ENCODE measurements at regions of chr11 and their contacts with region 1.

Region 1: GRCh38 chr11:73393479-73394380 is 17.5 kb downstream of the RELT start:
- DNase-seq: peak; percentile 74 to 86 (median 81)
- ATAC-seq: peak; percentile 93
- H3K4me3 ChIP-seq: no peak overlapping the region
- H3K27ac ChIP-seq: peak overlapping the region; percentile 8; the same call in 2 of the 3 replicates
- H3K4me1 ChIP-seq: peaks cover 0 to 48% of the 10 kb centered on the region in 2 experiments; a peak in 3 of 5 replicates
- H3K27me3 ChIP-seq: no peaks in the 10 kb centered on the region
- CTCF ChIP-seq: peak; percentile 86 to 94 (median 89)
- EP300 ChIP-seq: no peak
- POLR2A ChIP-seq: no peak
- RAD21 ChIP-seq: peak; percentile 90 to 93

Region 2: DNA sequence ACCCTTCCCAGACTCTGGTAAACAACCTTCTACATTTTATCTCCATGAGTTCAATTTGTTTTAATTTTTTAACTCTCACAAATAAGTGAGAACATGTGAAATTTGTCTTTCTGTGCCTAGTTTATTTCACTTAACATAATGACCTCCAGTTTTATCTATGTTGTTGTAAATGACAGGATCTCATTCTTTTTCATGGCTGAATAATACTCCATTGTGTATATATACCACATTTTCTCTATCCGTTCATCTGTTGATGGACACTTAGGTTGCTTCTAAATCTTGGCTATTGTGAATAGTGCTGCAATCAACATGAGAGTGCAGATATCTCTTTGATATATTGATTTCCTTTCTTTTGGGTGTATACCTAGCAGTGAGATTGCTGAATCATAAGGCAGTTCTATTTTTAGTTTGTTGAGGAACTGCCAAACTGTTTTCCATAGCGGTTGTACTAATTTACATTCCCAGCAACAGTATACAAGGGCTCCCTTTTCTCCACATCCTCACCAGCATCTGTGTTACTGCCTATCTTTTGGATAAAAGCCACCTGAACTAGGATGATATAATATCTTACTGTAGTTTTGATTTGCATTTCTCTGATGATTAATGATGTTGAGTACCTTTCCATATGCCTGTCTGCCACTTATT is 485.6 kb before region 1 on chr11:
- CTCF ChIA-PET with region 1: no interaction called
- POLR2A ChIA-PET with region 1: no interaction called
- in situ Hi-C with region 1: no loop called
- intact Hi-C with region 1: no loop called
- DNase-seq: no peak
- ATAC-seq: no peak
- H3K4me3 ChIP-seq: no peak overlapping the region
- H3K27ac ChIP-seq: no peak overlapping the region
- H3K4me1 ChIP-seq: no peaks in the 10 kb centered on the region
- H3K27me3 ChIP-seq: no peaks in the 10 kb centered on the region
- CTCF ChIP-seq: no peak
- EP300 ChIP-seq: no peak
- POLR2A ChIP-seq: no peak
- RAD21 ChIP-seq: no peak

Region 3: GRCh38 chr11:73307323-73308002 is 86.3 kb before region 1 on chr11:
- CTCF ChIA-PET with region 1: interaction called, 6 read pairs
- POLR2A ChIA-PET with region 1: interaction called, 3 read pairs
- in situ Hi-C with region 1: loop called (anchors 5 kb)
- intact Hi-C with region 1: no loop called
- DNase-seq: peak; percentile 92 to 94 (median 94)
- ATAC-seq: peak; percentile 93
- H3K4me3 ChIP-seq: peak overlapping the region; percentile 49
- H3K27ac ChIP-seq: peak overlapping the region; percentile 32; the same call in 1 of the 3 replicates
- H3K4me1 ChIP-seq: peaks cover 0 to 22% of the 10 kb centered on the region in 2 experiments; a peak in 4 of 5 replicates
- H3K27me3 ChIP-seq: peaks cover 6 to 43% of the 10 kb centered on the region in 2 experiments; a peak in 3 of 5 replicates
- CTCF ChIP-seq: peak; percentile 89 to 92 (median 91)
- EP300 ChIP-seq: peak; percentile 29; the same call in 1 of the 2 replicates
- POLR2A ChIP-seq: no peak
- RAD21 ChIP-seq: peak; percentile 83 to 91

Region 4: DNA sequence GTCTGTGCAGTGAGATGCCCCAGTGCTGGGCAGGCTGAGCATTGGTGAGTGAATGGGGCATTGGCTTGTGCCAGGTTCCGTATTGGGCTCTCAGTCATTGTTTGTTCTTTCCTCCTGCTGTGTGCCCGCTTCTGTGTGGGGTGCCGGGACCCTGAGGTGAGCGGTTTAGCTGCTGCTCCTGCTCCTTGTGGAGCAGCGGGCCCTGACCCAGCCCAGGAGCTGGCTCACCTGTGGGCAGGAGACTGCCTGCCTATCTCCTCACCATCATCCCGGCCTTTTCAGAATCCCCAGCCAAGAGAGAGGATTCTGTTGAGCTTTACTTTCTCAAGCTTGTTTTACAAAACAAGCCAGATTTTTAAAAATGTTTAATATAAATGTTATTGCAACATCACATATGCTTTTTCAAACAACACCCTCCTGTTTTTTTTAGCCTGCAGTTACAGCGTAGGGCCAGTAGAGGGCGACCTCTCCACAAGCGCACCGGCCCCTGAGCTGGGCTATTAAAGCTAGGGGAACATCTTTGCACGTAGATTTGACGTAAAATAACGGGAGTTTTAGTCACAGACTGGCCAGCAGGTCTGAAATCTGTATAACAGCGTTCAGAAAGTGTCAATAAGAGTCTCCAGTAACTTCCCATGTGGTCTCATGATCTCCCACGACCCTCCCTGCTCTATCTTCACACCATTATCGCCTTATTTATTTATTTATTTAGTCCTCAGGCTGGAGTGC is 42.7 kb before region 1 on chr11:
- CTCF ChIA-PET with region 1: interaction called, 51 read pairs
- POLR2A ChIA-PET with region 1: interaction called, 4 read pairs
- in situ Hi-C with region 1: loop called (anchors 5 kb)
- intact Hi-C with region 1: loop called (anchors 1 kb)
- DNase-seq: peak; percentile 71 to 88 (median 86)
- ATAC-seq: peak; percentile 82
- H3K4me3 ChIP-seq: no peak overlapping the region
- H3K27ac ChIP-seq: no peak overlapping the region
- H3K4me1 ChIP-seq: peaks cover 3 to 11% of the 10 kb centered on the region in 2 experiments; a peak in 2 of 5 replicates
- H3K27me3 ChIP-seq: peaks cover 16 to 46% of the 10 kb centered on the region in 2 experiments
- CTCF ChIP-seq: peak; percentile 91 to 98 (median 98)
- EP300 ChIP-seq: no peak
- POLR2A ChIP-seq: no peak
- RAD21 ChIP-seq: peak; percentile 86 to 89

Region 5: GRCh38 chr11:73376160-73376802 is 17.4 kb before region 1 on chr11 and contains the start of gene RELT:
- CTCF ChIA-PET with region 1: interaction called, 3 read pairs
- POLR2A ChIA-PET with region 1: interaction called, 7 read pairs
- in situ Hi-C with region 1: no loop called
- intact Hi-C with region 1: loop called (anchors 2 kb)
- DNase-seq: peak; percentile 93 to 97 (median 95)
- ATAC-seq: peak; percentile 94
- H3K4me3 ChIP-seq: peak within 1 kb of the TSS; percentile 95
- H3K27ac ChIP-seq: peak within 1 kb of the TSS; percentile 86
- H3K4me1 ChIP-seq: peaks cover 23 to 60% of the 10 kb centered on the region in 2 experiments
- H3K27me3 ChIP-seq: peaks cover 0 to 5% of the 10 kb centered on the region in 2 experiments; a peak in 1 of 5 replicates
- CTCF ChIP-seq: peak; percentile 90 to 95 (median 91)
- EP300 ChIP-seq: no peak; the same call in 1 of the 2 replicates
- POLR2A ChIP-seq: peak; percentile 80
- RAD21 ChIP-seq: peak; percentile 48 to 55
- polyA plus RNA-seq, gene RELT: 1.1 to 1.2 TPM

Region 6: DNA sequence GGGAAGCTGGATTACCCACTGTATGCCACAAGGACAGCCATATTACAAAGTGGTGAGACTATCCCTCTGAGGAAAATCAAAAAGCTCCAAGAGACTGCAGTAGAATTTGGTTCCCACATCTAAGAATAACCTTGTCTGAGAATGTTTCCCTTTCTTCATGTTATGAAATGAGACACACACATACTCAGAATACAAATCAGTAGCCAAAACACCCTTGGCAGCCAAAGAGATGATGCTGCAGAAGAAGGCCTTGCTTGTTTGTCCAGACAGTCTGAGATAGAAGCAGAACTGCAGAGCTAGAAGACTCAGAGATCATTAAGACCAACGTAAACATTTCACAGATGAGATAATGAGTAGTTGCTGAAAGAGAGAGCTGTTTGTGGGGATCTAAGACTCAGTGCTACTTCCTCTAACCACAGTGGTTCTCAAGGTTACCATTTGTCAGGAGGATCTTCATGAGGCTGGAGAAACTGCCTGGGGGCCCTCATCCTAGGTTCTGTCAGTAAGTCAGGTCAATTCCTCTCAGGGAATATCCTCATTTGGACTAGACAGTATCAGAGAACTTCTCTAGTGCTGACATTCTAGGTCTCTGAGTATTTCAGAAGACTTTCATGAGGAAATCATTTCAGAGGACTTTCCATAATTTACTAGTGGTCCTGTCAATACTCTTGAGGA is 21.4 kb after region 1 on chr11:
- CTCF ChIA-PET with region 1: no interaction called
- POLR2A ChIA-PET with region 1: no interaction called
- in situ Hi-C with region 1: no loop called
- intact Hi-C with region 1: no loop called
- DNase-seq: no peak
- ATAC-seq: no peak; the same call in 2 of the 3 replicates
- H3K4me3 ChIP-seq: no peak overlapping the region
- H3K27ac ChIP-seq: no peak overlapping the region
- H3K4me1 ChIP-seq: no peaks in the 10 kb centered on the region
- H3K27me3 ChIP-seq: no peaks in the 10 kb centered on the region
- CTCF ChIP-seq: no peak
- EP300 ChIP-seq: no peak
- POLR2A ChIP-seq: no peak
- RAD21 ChIP-seq: no peak